ENCODE measurements at regions of chr22 and their contacts with region 1.

Region 1: GRCh38 chr22:42901790-42902508 is 44.9 kb upstream of the ARFGAP3 start:
- DNase-seq: no peak
- ATAC-seq: peak; percentile 73

Region 2: DNA sequence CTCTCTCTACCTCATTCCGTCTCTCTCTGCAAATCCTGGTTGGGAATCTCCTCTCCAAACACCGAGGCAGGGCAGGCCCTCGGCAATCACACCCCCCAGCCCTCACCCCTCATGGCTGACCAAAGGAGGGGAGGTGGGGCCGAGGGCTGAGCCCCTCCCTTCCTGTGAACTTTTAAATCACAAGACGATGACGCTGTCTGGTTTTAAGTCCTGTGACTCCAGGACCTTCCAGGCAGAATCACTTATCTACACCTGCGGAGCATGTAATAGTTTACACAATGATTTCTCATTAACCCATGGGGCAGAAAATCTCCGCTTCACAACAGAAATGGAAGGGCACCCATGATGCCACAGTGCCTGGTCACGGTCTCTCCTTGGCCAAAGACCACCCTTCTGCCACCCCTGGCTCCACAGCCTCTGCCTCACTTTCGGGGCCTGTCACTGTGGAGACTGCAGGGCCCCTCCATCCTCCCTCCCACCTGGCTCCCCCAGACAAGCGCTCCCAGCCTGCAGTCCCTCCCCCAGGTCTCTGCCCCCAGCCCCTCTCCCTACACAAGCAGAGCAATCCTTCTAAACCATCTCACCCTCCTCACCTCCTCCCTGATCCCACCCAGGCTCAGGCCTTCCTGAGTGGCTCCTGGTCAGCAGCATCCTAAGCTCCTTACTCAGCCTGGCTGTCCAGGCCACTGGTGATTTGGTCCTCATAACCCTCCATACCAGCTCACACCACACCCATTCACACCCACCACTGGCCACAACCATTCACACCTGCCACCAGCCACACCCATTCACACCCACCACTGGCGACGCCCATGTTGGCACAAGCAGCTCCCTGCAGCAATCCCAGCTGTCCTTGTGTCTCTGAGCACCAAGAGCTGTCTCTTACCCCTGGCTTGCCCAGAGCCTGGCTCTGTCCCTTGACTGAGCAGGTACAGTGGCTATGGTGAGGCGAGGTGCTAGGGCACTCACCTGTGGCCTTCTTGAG is 14.1 kb before region 1 on chr22:
- intact Hi-C with region 1: loop called (anchors 2 kb)
- DNase-seq: no peak
- ATAC-seq: no peak

Region 3: DNA sequence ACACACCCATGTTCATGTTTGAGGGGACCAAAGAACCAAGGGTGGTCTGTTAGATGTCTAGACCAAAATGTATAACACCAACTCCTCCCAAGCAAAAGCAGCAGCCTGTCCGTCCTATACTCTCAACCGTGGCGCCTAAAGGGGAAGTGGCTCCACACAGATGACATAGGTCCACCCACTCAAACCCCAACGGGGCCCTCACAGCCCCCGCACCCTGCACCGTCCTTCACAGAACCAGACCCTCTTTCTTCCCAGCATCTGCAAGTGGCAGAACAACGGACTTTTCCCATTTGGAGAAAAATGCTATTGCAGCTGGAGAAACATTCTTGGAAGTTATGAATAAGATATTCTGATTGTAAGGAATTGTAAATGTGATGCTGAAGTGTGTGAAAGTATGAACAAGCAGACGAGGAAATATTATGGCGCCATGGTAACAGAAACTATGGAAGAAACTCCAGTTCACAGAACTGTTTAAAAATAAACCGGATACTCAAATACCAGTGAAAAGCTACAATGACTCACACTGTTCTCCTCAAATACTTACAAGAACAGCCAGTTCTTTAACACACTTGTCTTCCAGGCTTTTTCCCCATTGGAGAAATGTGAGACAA is 31.6 kb after region 1 on chr22:
- intact Hi-C with region 1: loop called (anchors 2 kb)
- DNase-seq: no peak
- ATAC-seq: peak; percentile 49

Region 4: DNA sequence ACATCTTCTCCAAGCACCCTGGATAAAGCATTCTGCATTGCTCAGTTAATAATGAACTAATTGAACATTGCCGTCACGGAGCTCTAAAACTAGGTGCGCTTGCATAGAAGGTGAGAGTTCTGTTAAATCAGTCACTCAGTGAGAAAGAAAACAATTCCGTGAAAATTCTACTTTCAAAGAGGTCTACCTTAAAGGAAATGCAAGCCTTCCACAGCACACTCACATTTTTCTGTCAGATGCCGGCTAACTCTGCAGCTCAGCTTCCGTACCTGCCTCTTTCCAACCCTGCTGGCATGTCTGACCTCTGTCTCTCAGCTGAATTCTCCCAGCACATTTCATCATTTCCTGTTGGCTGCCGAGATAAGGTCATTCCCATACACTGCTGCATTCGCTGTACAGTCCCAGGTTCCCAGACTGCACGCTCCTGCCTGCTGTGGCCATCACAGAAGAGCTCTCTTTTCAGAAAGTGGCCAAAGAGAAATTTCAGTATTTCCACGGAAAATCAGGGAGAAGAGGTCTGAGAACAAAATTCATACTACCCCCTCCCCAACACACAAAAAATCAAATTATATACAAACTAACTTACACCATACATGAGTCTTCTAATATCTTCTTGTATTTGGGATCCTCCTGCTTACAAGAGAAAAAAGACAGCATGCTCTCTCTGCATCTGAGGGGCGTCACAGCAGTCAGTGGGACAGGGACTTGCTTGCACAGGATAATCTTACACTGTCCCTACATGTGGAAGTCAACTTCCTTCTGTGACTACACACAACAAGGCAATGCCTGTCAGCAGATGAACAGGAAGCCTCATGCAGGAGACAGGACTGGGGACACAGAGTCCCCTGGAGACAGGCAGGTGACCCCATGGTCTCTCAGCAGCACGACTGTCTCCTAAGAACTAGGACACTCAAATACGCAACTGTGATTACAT is 57.9 kb after region 1 on chr22:
- intact Hi-C with region 1: loop called (anchors 5 kb)
- DNase-seq: peak; percentile 75
- ATAC-seq: peak; percentile 89

Region 5: DNA sequence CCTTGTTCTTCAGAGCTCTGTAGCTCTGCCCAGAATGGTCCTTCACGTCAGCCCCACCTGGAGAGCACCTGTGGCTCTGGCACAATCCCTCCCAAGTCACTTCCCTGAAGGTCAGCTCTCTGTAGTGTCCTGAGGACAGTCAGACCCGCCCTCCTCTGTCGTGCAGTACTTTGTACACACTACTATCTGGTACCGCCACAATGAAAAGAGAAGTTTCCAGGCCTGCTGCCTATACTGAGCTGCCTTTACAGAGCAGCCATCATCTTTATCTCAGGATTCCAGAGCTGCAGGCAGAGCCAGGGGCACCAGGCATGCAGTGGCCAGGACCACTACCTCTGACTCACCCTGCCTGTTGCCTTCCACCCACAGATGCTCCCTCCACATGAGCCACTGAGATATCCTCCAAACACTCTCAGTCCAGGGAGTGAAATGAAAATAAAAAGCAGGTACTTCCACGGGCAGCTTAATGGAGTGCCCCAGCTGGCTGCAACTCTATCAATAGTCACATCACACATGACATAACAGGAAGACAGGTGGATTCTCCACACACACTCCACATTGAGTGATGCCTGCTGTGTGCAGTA is 105.7 kb after region 1 on chr22:
- intact Hi-C with region 1: loop called (anchors 5 kb)
- DNase-seq: no peak
- ATAC-seq: peak; percentile 56